A549 (cell line): ENCODE measurements at regions of chr10 and their contacts with region 1.

Region 1: GRCh38 chr10:50367732-50368131 is 116.4 kb upstream of the ASAH2 start:
- DNase-seq: peak; percentile 35 to 58
- ATAC-seq: peak; percentile 94 to 95
- H3K4me3 ChIP-seq: no peak overlapping the region
- H3K27ac ChIP-seq: no peak overlapping the region
- H3K4me1 ChIP-seq: no peaks in the 10 kb centered on the region
- CTCF ChIP-seq: peak; percentile 47; the same call in 2 of the 3 replicates
- EP300 ChIP-seq: no peak
- POLR2A ChIP-seq: no peak
- RAD21 ChIP-seq: peak; percentile 56 to 64

Region 2: GRCh38 chr10:50271564-50272250 is 96.0 kb before region 1 on chr10:
- CTCF ChIA-PET with region 1: no interaction called
- POLR2A ChIA-PET with region 1: no interaction called
- DNase-seq: no peak
- ATAC-seq: 0 out of 6 replicates have a peak, but pooled peaks of 1 of the 2 experiments have one; percentile 34
- H3K4me3 ChIP-seq: no peak overlapping the region
- H3K27ac ChIP-seq: no peak overlapping the region
- H3K4me1 ChIP-seq: no peaks in the 10 kb centered on the region
- CTCF ChIP-seq: no peak
- EP300 ChIP-seq: no peak
- POLR2A ChIP-seq: no peak
- RAD21 ChIP-seq: no peak

Region 3: DNA sequence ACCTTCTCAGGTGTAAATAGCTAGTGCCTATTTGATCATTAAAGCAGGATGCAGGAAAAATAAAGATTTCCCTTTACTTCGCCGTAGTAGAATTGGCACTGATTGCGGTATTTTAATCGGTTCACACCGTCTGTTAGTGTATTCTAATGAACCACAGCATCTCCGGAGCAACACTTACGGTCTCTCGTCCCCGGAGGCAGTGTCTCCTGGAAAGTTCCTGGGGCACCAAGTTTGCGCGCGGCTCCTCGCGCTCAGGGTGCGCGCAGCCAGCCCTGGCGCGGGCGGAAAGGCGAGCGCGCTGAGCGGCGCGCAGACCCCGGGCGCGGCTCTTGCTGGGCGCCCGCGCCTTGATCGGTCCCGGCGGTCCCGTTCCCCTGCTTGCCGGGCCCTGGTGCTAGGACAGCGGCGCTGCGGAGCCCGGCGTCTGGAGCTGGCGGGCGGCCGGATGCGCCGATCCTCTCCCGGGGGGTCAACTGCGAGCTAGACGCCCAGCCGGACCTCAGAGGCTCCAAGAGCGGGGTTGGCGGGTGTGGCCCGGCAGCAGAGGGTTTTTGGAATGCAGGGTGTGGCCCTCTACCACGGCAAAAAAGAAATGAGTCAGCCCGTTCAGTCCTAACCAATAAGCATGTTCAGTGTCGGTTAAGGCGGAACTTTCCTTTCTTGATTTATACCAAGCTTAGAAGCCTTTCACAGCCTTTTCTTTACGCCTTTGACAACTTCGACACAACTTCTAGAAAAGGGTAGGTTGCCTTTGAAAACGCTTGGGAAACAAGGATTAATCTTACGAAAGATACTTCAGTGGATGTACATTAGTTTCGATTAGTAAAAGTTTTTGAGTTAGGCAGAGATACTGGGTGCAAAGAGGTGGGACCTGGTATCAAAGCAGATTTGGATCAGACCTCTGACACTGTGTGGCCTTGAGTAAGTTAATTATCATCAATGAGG is 50.4 kb after region 1 on chr10:
- CTCF ChIA-PET with region 1: interaction called, 14 read pairs
- POLR2A ChIA-PET with region 1: interaction called, 3 read pairs
- DNase-seq: peak; percentile 86 to 92
- ATAC-seq: peak; percentile 94 to 97
- H3K4me3 ChIP-seq: peak overlapping the region; percentile 58
- H3K27ac ChIP-seq: peak overlapping the region; percentile 86 to 96
- H3K4me1 ChIP-seq: peaks cover 40% of the 10 kb centered on the region
- CTCF ChIP-seq: 0 out of 3 replicates have a peak, but pooled peaks have one; percentile 11
- EP300 ChIP-seq: no peak
- POLR2A ChIP-seq: no peak
- RAD21 ChIP-seq: peak in 1 of 2 experiments; percentile 41; a peak in 1 of 5 replicates